ENCODE measurements at regions of chr19 and their contacts with region 1.

Region 1: GRCh38 chr19:56403764-56404704 is at the start of gene ZNF583:
- DNase-seq: peak; percentile 92 to 98
- H3K4me3 ChIP-seq: peak within 1 kb of the TSS; percentile 88 to 91
- H3K27ac ChIP-seq: peak within 1 kb of the TSS; percentile 93 to 97
- H3K4me1 ChIP-seq: peaks cover 0 to 10% of the 10 kb centered on the region in 2 donors
- H3K27me3 ChIP-seq: no peaks in the 10 kb centered on the region
- CTCF ChIP-seq: no peak
- total RNA-seq, gene ZNF583: 0.21 TPM

Region 2: DNA sequence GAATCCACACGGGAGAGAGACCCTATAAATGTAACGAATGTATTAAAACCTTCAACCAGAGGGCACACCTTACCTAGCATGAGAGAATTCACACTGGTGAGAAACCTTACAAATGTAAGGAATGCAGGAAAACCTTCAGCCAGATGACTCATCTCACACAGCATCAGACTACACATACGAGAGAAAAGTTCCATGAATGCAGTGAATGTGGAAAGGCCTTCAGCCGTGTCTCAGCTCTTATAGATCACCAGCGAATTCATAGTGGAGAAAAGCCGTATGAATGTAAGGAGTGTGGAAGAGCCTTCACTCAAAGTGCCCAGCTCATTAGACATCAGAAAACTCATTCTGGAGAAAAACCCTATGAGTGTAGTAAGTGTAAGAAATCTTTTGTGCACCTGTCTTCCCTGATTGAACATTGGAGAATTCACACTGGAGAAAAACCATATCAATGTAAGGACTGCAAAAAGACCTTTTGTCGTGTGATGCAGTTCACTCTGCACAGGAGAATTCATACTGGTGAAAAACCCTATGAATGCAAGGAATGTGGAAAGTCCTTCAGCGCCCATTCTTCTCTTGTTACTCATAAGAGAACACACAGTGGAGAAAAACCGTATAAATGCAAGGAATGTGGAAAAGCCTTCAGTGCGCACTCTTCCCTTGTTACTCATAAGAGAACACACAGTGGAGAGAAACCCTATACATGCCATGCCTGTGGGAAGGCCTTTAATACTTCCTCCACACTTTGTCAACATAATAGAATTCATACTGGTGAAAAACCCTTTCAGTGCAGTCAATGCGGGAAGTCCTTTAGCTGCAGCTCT is 26.7 kb before region 1 on chr19:
- intact Hi-C with region 1: no loop called
- DNase-seq: no peak
- H3K4me3 ChIP-seq: no peak overlapping the region
- H3K27ac ChIP-seq: no peak overlapping the region
- H3K4me1 ChIP-seq: no peaks in the 10 kb centered on the region
- H3K27me3 ChIP-seq: no peaks in the 10 kb centered on the region
- CTCF ChIP-seq: no peak

Region 3: GRCh38 chr19:56393119-56394012 is 10.7 kb before region 1 on chr19 and contains the start of gene ZNF582:
- intact Hi-C with region 1: loop called (anchors 1 kb)
- DNase-seq: peak; percentile 89 to 98
- H3K4me3 ChIP-seq: peak within 1 kb of the TSS; percentile 67 to 85
- H3K27ac ChIP-seq: peak within 1 kb of the TSS; percentile 91 to 93
- H3K4me1 ChIP-seq: peaks cover 0 to 3% of the 10 kb centered on the region in 2 donors
- H3K27me3 ChIP-seq: no peaks in the 10 kb centered on the region
- CTCF ChIP-seq: peak; percentile 49 to 80 (median 69)
- total RNA-seq, gene ZNF582: 0.43 TPM

Region 4: GRCh38 chr19:56538254-56538760 is 134.3 kb after region 1 on chr19:
- intact Hi-C with region 1: loop called (anchors 2 kb)
- DNase-seq: peak; percentile 45 to 93
- H3K4me3 ChIP-seq: peak overlapping the region; percentile 85 to 92
- H3K27ac ChIP-seq: peak overlapping the region; percentile 91 to 94
- H3K4me1 ChIP-seq: peaks cover 0 to 10% of the 10 kb centered on the region in 2 donors
- H3K27me3 ChIP-seq: no peaks in the 10 kb centered on the region
- CTCF ChIP-seq: no peak

Region 5: GRCh38 chr19:56594783-56595547 is 190.9 kb after region 1 on chr19 and contains the start of gene ZNF71:
- intact Hi-C with region 1: loop called (anchors 10 kb)
- DNase-seq: peak; percentile 43 to 93
- H3K4me3 ChIP-seq: peak within 1 kb of the TSS; percentile 92 to 98
- H3K27ac ChIP-seq: peak within 1 kb of the TSS; percentile 67 to 75
- H3K4me1 ChIP-seq: no peaks in the 10 kb centered on the region
- H3K27me3 ChIP-seq: no peaks in the 10 kb centered on the region
- CTCF ChIP-seq: no peak
- total RNA-seq, gene ZNF71: 30.5 TPM

Measured in ascending aorta (tissue), 2 donors.